CD4-positive, alpha-beta memory T cell (primary cell): ENCODE measurements at regions of chr9 and their contacts with region 1.

Region 1: GRCh38 chr9:114930056-114930812 is at the start of gene TNFSF8:
- DNase-seq: peak; percentile 76 to 90 (median 80)
- H3K4me3 ChIP-seq: peak within 1 kb of the TSS; percentile 67 to 97
- H3K4me3 Mint-ChIP-seq: peak within 1 kb of the TSS; percentile 95 to 100 (median 98)
- H3K27ac ChIP-seq: peak within 1 kb of the TSS; percentile 75
- H3K27ac Mint-ChIP-seq: peak within 1 kb of the TSS; percentile 95 to 99 (median 98)
- H3K4me1 ChIP-seq: peaks cover 38% of the 10 kb centered on the region
- H3K4me1 Mint-ChIP-seq: peaks cover 31 to 66% (median 44%) of the 10 kb centered on the region in 4 donors
- H3K27me3 ChIP-seq: no peaks in the 10 kb centered on the region
- H3K27me3 Mint-ChIP-seq: no peaks in the 10 kb centered on the region
- total RNA-seq, gene TNFSF8: 43.2 to 44.2 TPM

Region 2: GRCh38 chr9:113775749-113776148 is 1154.5 kb before region 1 on chr9:
- CTCF ChIA-PET with region 1: no interaction called
- POLR2A ChIA-PET with region 1: no interaction called
- intact Hi-C with region 1: no loop called
- DNase-seq: no peak
- H3K4me3 ChIP-seq: no peak overlapping the region
- H3K4me3 Mint-ChIP-seq: no peak overlapping the region
- H3K27ac ChIP-seq: no peak overlapping the region
- H3K27ac Mint-ChIP-seq: no peak overlapping the region
- H3K4me1 ChIP-seq: no peaks in the 10 kb centered on the region
- H3K4me1 Mint-ChIP-seq: no peaks in the 10 kb centered on the region
- H3K27me3 ChIP-seq: no peaks in the 10 kb centered on the region
- H3K27me3 Mint-ChIP-seq: peaks cover 3 to 14% of the 10 kb centered on the region in 2 donors

Region 3: DNA sequence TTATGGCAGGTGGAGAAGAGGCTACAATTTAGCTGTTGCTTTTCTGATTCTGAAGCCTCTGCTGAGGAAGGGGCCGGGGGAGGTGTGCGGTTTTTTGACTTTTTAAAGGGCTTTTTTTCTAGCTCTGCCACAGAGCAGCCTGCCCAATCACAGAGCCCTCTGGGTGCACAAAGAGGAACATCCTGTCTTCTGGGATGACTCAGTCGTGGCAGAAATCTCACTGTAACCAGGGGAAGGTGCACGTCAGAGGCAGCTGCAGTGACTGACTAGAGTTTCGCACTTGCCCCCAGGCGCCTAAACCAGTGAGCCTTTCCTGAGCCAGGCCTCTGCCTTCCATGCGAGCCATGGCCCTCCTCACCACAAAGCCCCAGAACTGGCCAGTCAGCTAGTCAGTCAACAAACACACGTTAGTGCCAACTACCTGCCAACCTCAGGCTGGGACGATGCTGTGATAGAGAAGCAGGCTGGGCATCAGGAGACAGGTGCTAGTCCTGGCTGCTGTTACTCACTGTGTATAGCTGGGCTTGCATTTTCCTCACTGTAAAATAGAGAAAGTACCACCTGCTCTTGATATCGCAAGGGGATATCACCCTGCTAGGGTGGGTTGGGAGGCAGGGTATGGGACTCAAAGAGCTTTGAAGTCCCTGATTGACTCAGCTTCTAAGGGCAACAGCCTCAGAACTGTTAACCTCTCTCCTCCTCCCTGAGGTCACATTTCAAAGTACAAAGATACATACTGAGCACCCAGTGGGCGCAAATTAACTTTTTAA is 544.6 kb before region 1 on chr9:
- CTCF ChIA-PET with region 1: no interaction called
- POLR2A ChIA-PET with region 1: interaction called, 11 read pairs
- intact Hi-C with region 1: loop called (anchors 10 kb)
- DNase-seq: peak; percentile 91 to 98 (median 93)
- H3K4me3 ChIP-seq: peak overlapping the region; percentile 78 to 99
- H3K4me3 Mint-ChIP-seq: peak overlapping the region; percentile 95 to 100 (median 97)
- H3K27ac ChIP-seq: peak overlapping the region; percentile 88
- H3K27ac Mint-ChIP-seq: peak overlapping the region; percentile 96 to 99 (median 97)
- H3K4me1 ChIP-seq: peaks cover 79% of the 10 kb centered on the region
- H3K4me1 Mint-ChIP-seq: peaks cover 44 to 91% (median 66%) of the 10 kb centered on the region in 4 donors
- H3K27me3 ChIP-seq: no peaks in the 10 kb centered on the region
- H3K27me3 Mint-ChIP-seq: no peaks in the 10 kb centered on the region

Region 4: DNA sequence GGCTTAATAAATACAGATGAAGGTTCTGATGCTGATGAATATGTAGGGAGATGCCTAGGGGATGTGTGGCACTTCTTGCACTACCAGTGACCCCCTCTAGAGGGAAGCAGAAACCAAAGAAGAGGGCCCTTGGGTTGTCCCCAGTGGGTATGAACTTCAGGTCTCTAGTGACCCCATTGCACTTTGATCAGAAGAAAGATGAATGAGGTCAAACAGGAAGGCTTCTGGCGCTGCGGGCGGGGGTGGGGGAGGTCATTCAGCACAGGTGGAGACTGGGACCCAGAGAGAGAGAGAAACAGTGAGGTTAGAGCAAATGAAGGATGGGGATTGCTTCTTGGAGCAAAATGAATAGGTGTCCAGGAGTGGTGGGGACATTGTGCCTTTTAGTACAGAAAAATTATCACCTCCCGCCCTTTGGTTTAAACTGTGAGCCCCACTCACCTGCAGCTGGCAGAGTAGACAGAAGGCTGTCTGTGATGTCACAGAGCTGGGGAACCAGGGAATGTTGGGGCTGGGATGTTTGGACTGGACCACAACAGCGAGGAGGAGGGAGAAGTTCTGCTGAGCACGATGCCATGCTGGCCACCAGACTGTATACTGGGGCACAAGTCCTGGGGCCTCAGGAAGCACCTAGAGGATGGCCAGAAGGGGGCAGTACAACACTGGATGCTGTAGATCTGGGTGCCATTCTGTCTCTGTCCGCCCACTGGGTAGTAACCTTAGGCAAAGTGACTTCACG is 248.5 kb before region 1 on chr9 and contains the start of gene TEX48:
- CTCF ChIA-PET with region 1: interaction called, 9 read pairs
- POLR2A ChIA-PET with region 1: interaction called, 12 read pairs
- intact Hi-C with region 1: no loop called
- DNase-seq: peak; percentile 79 to 84 (median 81)
- H3K4me3 ChIP-seq: peak within 1 kb of the TSS in 1 of 2 donors; percentile 11
- H3K4me3 Mint-ChIP-seq: peak within 1 kb of the TSS; percentile 1 to 80 (median 62)
- H3K27ac ChIP-seq: peak within 1 kb of the TSS; percentile 23
- H3K27ac Mint-ChIP-seq: peak within 1 kb of the TSS; percentile 75 to 96 (median 92)
- H3K4me1 ChIP-seq: peaks cover 22% of the 10 kb centered on the region
- H3K4me1 Mint-ChIP-seq: peaks cover 15 to 18% (median 17%) of the 10 kb centered on the region in 4 donors
- H3K27me3 ChIP-seq: no peaks in the 10 kb centered on the region
- H3K27me3 Mint-ChIP-seq: peaks cover 2 to 3% of the 10 kb centered on the region in 2 donors
- total RNA-seq, gene TEX48: not detected

Region 5: GRCh38 chr9:114738581-114739316 is 191.5 kb before region 1 on chr9:
- CTCF ChIA-PET with region 1: interaction called, 29 read pairs
- POLR2A ChIA-PET with region 1: interaction called, 32 read pairs
- intact Hi-C with region 1: loop called (anchors 2 kb)
- DNase-seq: peak; percentile 73 to 75 (median 74)
- H3K4me3 ChIP-seq: no peak overlapping the region
- H3K4me3 Mint-ChIP-seq: peak overlapping the region in 3 of 8 donors; percentile 16 to 64 (median 36)
- H3K27ac ChIP-seq: no peak overlapping the region
- H3K27ac Mint-ChIP-seq: peak overlapping the region; percentile 67 to 95 (median 91)
- H3K4me1 ChIP-seq: peaks cover 44% of the 10 kb centered on the region
- H3K4me1 Mint-ChIP-seq: peaks cover 34 to 54% (median 43%) of the 10 kb centered on the region in 4 donors
- H3K27me3 ChIP-seq: no peaks in the 10 kb centered on the region
- H3K27me3 Mint-ChIP-seq: no peaks in the 10 kb centered on the region

Region 6: DNA sequence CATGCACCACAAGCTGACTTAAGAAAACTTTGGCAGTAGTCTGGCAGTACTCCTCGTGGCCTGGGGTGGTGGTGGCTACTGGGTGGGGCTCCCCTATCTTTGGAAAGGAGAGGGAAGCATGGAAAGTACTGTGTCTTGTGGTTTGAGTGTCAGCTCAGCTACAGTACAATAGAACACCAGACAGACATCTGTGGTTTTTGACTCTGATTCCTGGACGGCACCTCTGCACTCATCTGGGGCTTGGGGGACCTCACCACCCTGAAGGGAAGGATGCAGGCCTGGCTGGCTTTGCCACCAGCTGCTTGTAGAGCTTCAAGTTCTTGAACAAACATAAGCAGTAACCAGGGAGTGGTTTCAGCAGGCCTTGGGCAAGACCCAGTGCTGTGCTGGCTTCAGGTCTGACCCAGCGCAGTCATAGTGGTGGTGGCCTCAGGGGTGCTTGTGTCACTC is 40.4 kb before region 1 on chr9:
- CTCF ChIA-PET with region 1: no interaction called
- POLR2A ChIA-PET with region 1: interaction called, 10 read pairs
- intact Hi-C with region 1: no loop called
- DNase-seq: no peak
- H3K4me3 ChIP-seq: no peak overlapping the region
- H3K4me3 Mint-ChIP-seq: peak overlapping the region in 5 of 8 donors; percentile 12 to 65 (median 40)
- H3K27ac ChIP-seq: no peak overlapping the region
- H3K27ac Mint-ChIP-seq: peak overlapping the region in 6 of 7 donors; percentile 19 to 82 (median 46)
- H3K4me1 ChIP-seq: peaks cover 49% of the 10 kb centered on the region
- H3K4me1 Mint-ChIP-seq: peaks cover 38 to 65% (median 49%) of the 10 kb centered on the region in 4 donors
- H3K27me3 ChIP-seq: no peaks in the 10 kb centered on the region
- H3K27me3 Mint-ChIP-seq: no peaks in the 10 kb centered on the region

Region 7: DNA sequence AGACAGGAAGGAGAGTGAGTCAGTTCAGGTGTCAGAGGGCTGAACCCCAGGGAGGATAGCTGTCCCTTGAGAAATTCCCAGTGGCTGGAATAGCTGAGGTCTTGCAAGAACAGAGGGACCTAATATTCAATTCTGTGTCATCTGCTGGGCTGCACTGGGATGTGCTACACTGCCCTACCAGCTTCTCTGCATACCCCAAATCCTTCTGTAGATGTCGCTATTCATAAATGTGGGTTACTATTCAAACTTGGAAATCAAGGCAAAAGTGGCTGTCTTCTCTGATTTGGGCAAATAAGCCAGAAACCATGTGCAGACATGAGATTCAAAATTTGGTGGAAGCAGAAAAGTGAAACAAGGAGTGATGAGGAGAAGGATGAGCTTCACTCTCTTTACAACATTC is 16.1 kb before region 1 on chr9:
- CTCF ChIA-PET with region 1: interaction called, 90 read pairs
- POLR2A ChIA-PET with region 1: interaction called, 150 read pairs
- intact Hi-C with region 1: loop called (anchors 2 kb)
- DNase-seq: no peak
- H3K4me3 ChIP-seq: no peak overlapping the region
- H3K4me3 Mint-ChIP-seq: no peak overlapping the region
- H3K27ac ChIP-seq: peak overlapping the region; percentile 3
- H3K27ac Mint-ChIP-seq: peak overlapping the region; percentile 53 to 91 (median 72)
- H3K4me1 ChIP-seq: peaks cover 78% of the 10 kb centered on the region
- H3K4me1 Mint-ChIP-seq: peaks cover 66 to 97% (median 86%) of the 10 kb centered on the region in 4 donors
- H3K27me3 ChIP-seq: no peaks in the 10 kb centered on the region
- H3K27me3 Mint-ChIP-seq: no peaks in the 10 kb centered on the region

Region 8: GRCh38 chr9:114988962-114989599 is 58.8 kb after region 1 on chr9:
- CTCF ChIA-PET with region 1: interaction called, 4 read pairs
- POLR2A ChIA-PET with region 1: interaction called, 39 read pairs
- intact Hi-C with region 1: loop called (anchors 10 kb)
- DNase-seq: peak in 1 of 5 donors; percentile 44
- H3K4me3 ChIP-seq: no peak overlapping the region
- H3K4me3 Mint-ChIP-seq: peak overlapping the region in 7 of 8 donors; percentile 1 to 77 (median 57)
- H3K27ac ChIP-seq: peak overlapping the region; percentile 27
- H3K27ac Mint-ChIP-seq: peak overlapping the region; percentile 82 to 96 (median 88)
- H3K4me1 ChIP-seq: peaks cover 24% of the 10 kb centered on the region
- H3K4me1 Mint-ChIP-seq: peaks cover 21 to 46% (median 32%) of the 10 kb centered on the region in 4 donors
- H3K27me3 ChIP-seq: no peaks in the 10 kb centered on the region
- H3K27me3 Mint-ChIP-seq: no peaks in the 10 kb centered on the region